Right cardiac atrium (tissue), 5 donors: ENCODE measurements at regions of chr9 and their contacts with region 1.

Region 1: GRCh38 chr9:100437860-100438805 is 11.2 kb downstream of the MSANTD3 start:
- DNase-seq: peak in 2 of 3 donors; percentile 61 to 80
- ATAC-seq: peak in 1 of 2 donors; percentile 63
- H3K4me3 ChIP-seq: no peak overlapping the region
- H3K27ac ChIP-seq: no peak overlapping the region
- H3K4me1 ChIP-seq: no peaks in the 10 kb centered on the region
- H3K27me3 ChIP-seq: no peaks in the 10 kb centered on the region

Region 2: DNA sequence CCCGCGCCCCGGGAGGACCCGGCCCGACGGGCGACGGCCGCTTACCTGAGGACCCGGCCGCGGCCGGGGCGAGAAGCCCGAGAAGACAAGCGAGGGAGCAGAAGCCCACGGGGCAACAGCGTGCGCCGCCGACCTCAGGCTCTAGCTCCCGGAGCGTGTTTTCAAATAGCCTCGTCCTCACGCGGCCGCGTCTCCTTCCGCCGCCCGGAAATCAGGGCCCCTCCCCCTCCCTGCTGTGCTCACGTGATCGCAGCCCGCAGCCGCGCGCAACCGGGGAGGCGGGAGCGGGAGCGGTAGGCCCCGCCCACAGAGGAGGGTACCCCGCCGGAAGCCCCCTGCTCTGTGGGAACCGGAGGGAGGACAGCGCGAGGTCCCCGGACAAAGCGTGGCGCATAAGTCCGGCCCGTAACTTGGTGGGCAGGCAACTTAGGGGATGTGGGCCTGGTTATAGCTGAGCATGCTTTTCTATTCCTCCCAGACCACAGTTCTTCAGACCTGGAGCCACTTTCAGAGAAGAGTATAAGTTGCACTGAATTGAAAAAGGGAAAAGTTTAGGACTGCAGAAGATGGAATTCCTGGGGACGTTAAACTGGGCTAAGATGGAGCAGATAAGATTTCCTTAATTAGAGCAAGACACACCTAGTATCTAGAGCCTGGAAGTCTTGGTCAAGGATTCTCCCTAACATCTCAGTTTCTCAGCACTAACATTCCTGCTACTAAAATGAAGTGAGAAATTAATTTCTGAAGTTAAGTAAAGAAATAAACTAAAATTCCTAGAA is 85.2 kb before region 1 on chr9 and contains the start of gene TEX10:
- intact Hi-C with region 1: loop called in 1 of 4 experiments (anchors 10 kb)
- DNase-seq: peak; percentile 91 to 96 (median 96)
- ATAC-seq: peak; percentile 98 to 99
- H3K4me3 ChIP-seq: peak within 1 kb of the TSS; percentile 76
- H3K27ac ChIP-seq: peak within 1 kb of the TSS; percentile 4
- H3K4me1 ChIP-seq: peaks cover 2% of the 10 kb centered on the region
- H3K27me3 ChIP-seq: no peaks in the 10 kb centered on the region
- total RNA-seq, gene TEX10: 8.7 to 10.4 (median 8.8) TPM

Region 3: GRCh38 chr9:100505564-100506159 is 67.5 kb after region 1 on chr9:
- intact Hi-C with region 1: no loop called
- DNase-seq: peak; percentile 59 to 86 (median 74)
- ATAC-seq: no peak
- H3K4me3 ChIP-seq: no peak overlapping the region
- H3K27ac ChIP-seq: no peak overlapping the region
- H3K4me1 ChIP-seq: no peaks in the 10 kb centered on the region
- H3K27me3 ChIP-seq: no peaks in the 10 kb centered on the region

Region 4: GRCh38 chr9:100554935-100555401 is 116.8 kb after region 1 on chr9:
- intact Hi-C with region 1: no loop called
- DNase-seq: no peak
- ATAC-seq: no peak
- H3K4me3 ChIP-seq: no peak overlapping the region
- H3K27ac ChIP-seq: no peak overlapping the region
- H3K4me1 ChIP-seq: no peaks in the 10 kb centered on the region
- H3K27me3 ChIP-seq: no peaks in the 10 kb centered on the region

Region 5: DNA sequence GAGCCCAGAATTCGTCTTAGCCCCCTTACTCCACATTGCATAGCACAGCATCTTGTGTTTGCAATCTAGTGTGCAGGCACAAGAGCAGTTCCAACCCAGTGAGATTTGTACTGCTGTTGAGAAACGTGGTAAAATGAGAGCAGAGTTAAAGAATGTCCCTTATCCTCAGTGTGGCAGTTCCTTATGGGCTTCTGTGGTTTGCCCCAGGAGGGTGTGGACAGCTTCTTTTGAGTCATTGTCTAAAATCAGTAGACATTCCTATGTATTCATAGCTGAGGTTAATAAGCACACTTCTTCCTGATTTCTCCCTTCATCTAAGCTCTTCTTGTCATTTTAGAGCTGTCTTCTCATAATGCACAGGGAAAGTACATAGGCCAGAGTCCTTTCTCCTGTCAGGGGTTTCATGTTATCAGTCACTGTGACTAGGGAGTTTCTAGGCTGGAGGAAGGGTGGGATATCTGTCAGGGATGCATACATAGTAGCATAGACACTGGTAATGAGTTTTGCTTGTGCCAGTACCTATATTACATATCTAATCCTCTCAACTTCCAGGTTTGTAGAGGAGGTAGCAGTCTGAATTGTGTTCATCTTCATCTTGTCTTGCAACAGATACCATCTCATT is 137.7 kb after region 1 on chr9:
- intact Hi-C with region 1: loop called in 1 of 4 experiments (anchors 5 kb)
- DNase-seq: no peak
- ATAC-seq: no peak
- H3K4me3 ChIP-seq: no peak overlapping the region
- H3K27ac ChIP-seq: no peak overlapping the region
- H3K4me1 ChIP-seq: no peaks in the 10 kb centered on the region
- H3K27me3 ChIP-seq: no peaks in the 10 kb centered on the region